CD4-positive, alpha-beta T cell (primary cell): ENCODE measurements at regions of chr11 and their contacts with region 1.

Region 1: GRCh38 chr11:121112498-121113455 is 11.7 kb downstream of the TECTA start:
- DNase-seq: peak in 9 of 14 experiments; percentile 2 to 45 (median 11)
- ATAC-seq: no peak
- H3K4me3 ChIP-seq: no peak overlapping the region
- H3K4me3 Mint-ChIP-seq: no peak overlapping the region
- H3K27ac ChIP-seq: no peak overlapping the region
- H3K27ac Mint-ChIP-seq: no peak overlapping the region
- H3K4me1 ChIP-seq: peaks cover 4% of the 10 kb centered on the region
- H3K4me1 Mint-ChIP-seq: no peaks in the 10 kb centered on the region
- H3K27me3 ChIP-seq: peaks cover 4 to 6% of the 10 kb centered on the region in 2 experiments
- H3K27me3 Mint-ChIP-seq: peaks cover 23% of the 10 kb centered on the region
- CTCF ChIP-seq: peak; percentile 56

Region 2: DNA sequence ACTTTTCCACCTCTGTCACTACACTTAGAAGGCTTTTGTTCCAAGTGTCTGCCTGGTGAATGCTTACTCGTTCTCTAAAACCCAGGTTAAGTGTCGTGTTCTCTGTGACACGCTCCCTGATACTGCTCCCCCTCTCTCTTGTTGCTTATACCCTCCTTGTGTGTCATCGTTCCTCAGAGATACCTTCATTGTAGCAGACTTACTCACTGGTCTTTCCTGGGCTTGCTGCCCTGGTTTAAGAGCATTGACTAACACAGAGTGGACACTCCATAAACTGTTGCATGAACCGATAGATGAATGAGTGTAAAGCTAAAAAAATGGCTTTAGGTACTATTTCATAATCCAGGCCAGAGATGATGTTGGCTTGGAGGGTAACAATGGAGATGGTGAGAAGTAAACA is 429.9 kb before region 1 on chr11:
- CTCF ChIA-PET with region 1: no interaction called
- POLR2A ChIA-PET with region 1: no interaction called
- intact Hi-C with region 1: loop called in 1 of 2 experiments (anchors 10 kb)
- DNase-seq: no peak
- ATAC-seq: no peak
- H3K4me3 ChIP-seq: no peak overlapping the region
- H3K4me3 Mint-ChIP-seq: no peak overlapping the region
- H3K27ac ChIP-seq: no peak overlapping the region
- H3K27ac Mint-ChIP-seq: no peak overlapping the region
- H3K4me1 ChIP-seq: no peaks in the 10 kb centered on the region
- H3K4me1 Mint-ChIP-seq: no peaks in the 10 kb centered on the region
- H3K27me3 ChIP-seq: peaks cover 3 to 4% of the 10 kb centered on the region in 2 experiments
- H3K27me3 Mint-ChIP-seq: peaks cover 48% of the 10 kb centered on the region
- CTCF ChIP-seq: no peak